CD4-positive, alpha-beta T cell (primary cell): ENCODE measurements at regions of chr1 and their contacts with region 1.

Region 1: DNA sequence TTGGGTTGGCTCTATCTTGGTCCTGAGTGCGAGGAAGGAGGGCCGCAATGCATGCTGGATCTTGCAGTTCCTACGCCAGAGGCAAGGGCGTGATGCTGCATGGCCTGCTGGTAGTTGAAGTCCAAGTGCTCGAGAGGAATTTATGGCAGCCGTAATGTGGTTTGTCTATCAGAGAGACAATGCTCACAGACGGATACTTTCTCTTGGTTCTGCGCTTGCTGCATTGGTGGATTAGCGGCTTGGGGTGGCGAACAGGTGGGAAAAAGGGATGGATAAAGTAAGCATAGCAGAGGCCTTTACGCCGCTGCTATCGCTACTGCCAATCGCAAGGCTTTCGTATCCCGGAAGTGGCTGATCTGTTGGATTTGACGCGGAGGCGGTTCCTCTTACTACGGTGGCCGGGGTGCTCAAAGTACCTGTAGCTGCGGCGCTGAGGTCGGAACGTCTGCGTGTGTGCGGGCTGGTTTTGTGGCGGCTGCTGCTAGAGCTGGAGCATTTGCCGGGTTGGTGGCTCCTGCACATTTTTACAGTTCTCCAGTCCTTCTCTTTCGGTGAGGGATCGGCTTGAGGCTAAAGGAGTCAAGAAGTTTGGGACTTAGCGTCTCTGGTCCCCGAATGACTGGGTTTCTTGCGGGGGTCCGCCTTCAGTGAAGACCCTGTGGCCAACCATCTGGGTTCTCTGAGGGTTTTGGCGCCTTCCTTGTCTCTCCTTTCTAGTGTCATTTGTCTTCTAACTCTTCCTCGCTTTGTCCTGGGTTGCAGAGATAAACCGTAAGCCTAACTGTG is at the start of gene ATG4C:
- DNase-seq: peak; percentile 83 to 97 (median 88)
- ATAC-seq: peak; percentile 96
- H3K4me3 ChIP-seq: peak within 1 kb of the TSS; percentile 63
- H3K4me3 Mint-ChIP-seq: no peak within 1 kb of the TSS
- H3K27ac ChIP-seq: peak within 1 kb of the TSS; percentile 85 to 88
- H3K27ac Mint-ChIP-seq: no peak within 1 kb of the TSS
- H3K4me1 ChIP-seq: peaks cover 10% of the 10 kb centered on the region
- H3K4me1 Mint-ChIP-seq: peaks cover 14% of the 10 kb centered on the region
- H3K27me3 ChIP-seq: no peaks in the 10 kb centered on the region
- H3K27me3 Mint-ChIP-seq: peaks cover 4% of the 10 kb centered on the region
- CTCF ChIP-seq: no peak
- total RNA-seq, gene ATG4C: 4.2 to 4.6 TPM

Region 2: GRCh38 chr1:61724813-61725694 is 1058.9 kb before region 1 on chr1 and contains the start of gene TM2D1:
- CTCF ChIA-PET with region 1: no interaction called
- POLR2A ChIA-PET with region 1: no interaction called
- intact Hi-C with region 1: loop called in 1 of 2 experiments (anchors 10 kb)
- DNase-seq: peak; percentile 65 to 92 (median 78)
- ATAC-seq: peak; percentile 91
- H3K4me3 ChIP-seq: peak within 1 kb of the TSS; percentile 93
- H3K4me3 Mint-ChIP-seq: peak within 1 kb of the TSS; percentile 97
- H3K27ac ChIP-seq: peak within 1 kb of the TSS; percentile 87 to 91
- H3K27ac Mint-ChIP-seq: peak within 1 kb of the TSS; percentile 97
- H3K4me1 ChIP-seq: peaks cover 17% of the 10 kb centered on the region
- H3K4me1 Mint-ChIP-seq: peaks cover 40% of the 10 kb centered on the region
- H3K27me3 ChIP-seq: no peaks in the 10 kb centered on the region
- H3K27me3 Mint-ChIP-seq: no peaks in the 10 kb centered on the region
- CTCF ChIP-seq: no peak
- total RNA-seq, gene TM2D1: 12.0 to 13.7 TPM

Region 3: GRCh38 chr1:62271948-62272728 is 511.8 kb before region 1 on chr1:
- CTCF ChIA-PET with region 1: no interaction called
- POLR2A ChIA-PET with region 1: no interaction called
- intact Hi-C with region 1: loop called in 1 of 2 experiments (anchors 5 kb)
- DNase-seq: peak; percentile 11 to 71 (median 48)
- ATAC-seq: peak; percentile 90
- H3K4me3 ChIP-seq: no peak overlapping the region
- H3K4me3 Mint-ChIP-seq: peak overlapping the region; percentile 47
- H3K27ac ChIP-seq: peak overlapping the region; percentile 31 to 69
- H3K27ac Mint-ChIP-seq: peak overlapping the region; percentile 87
- H3K4me1 ChIP-seq: peaks cover 27% of the 10 kb centered on the region
- H3K4me1 Mint-ChIP-seq: peaks cover 37% of the 10 kb centered on the region
- H3K27me3 ChIP-seq: no peaks in the 10 kb centered on the region
- H3K27me3 Mint-ChIP-seq: no peaks in the 10 kb centered on the region
- CTCF ChIP-seq: no peak

Region 4: DNA sequence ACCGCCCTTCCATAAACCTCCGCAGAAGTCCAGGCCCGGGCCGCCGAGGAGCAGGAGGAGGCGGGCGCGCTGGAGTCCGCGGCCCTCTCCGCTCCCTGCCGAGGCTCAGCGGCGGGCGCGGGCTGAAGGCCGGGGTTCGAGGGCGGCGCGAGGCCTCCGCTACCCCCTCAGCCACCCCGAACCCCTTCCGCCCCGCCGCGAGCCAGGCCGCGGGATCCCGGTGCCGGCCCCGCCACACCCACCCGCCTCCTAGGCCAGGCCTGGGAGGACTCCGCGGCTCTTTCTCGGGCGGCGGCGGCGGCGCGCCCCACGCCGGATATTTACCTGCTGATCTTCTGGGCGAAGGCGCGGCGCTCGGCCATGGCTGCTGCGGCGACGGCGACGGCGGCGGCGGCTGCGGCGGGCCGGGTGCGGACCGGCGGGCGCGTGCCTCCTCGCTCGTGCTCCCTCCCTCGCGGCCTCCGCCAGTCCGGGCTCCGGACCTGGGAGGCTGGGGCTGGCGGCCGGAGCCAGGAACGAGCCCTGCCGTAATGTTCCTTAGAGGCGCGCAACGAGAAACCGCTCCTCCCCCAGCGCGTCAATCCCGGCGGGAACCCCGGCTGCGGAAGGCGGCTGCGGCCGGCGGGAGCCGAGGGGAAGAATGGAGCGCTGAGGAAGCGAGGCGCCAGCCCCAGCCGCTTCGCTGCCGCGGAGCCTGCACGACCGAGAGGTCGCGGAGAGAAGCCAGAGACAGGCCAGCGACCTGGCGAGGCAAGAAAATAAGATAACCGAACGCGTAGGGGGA is 95.8 kb before region 1 on chr1 and contains the start of gene DOCK7:
- CTCF ChIA-PET with region 1: no interaction called
- POLR2A ChIA-PET with region 1: no interaction called
- intact Hi-C with region 1: loop called in 1 of 2 experiments (anchors 5 kb)
- DNase-seq: peak; percentile 19 to 73 (median 54)
- ATAC-seq: peak; percentile 76
- H3K4me3 ChIP-seq: peak within 1 kb of the TSS; percentile 77
- H3K4me3 Mint-ChIP-seq: peak within 1 kb of the TSS; percentile 98
- H3K27ac ChIP-seq: peak within 1 kb of the TSS in 1 of 2 donors; percentile 58
- H3K27ac Mint-ChIP-seq: peak within 1 kb of the TSS; percentile 88
- H3K4me1 ChIP-seq: peaks cover 7% of the 10 kb centered on the region
- H3K4me1 Mint-ChIP-seq: peaks cover 37% of the 10 kb centered on the region
- H3K27me3 ChIP-seq: no peaks in the 10 kb centered on the region
- H3K27me3 Mint-ChIP-seq: peaks cover 5% of the 10 kb centered on the region
- CTCF ChIP-seq: no peak
- total RNA-seq, gene DOCK7: 6.0 to 7.9 TPM

Region 5: DNA sequence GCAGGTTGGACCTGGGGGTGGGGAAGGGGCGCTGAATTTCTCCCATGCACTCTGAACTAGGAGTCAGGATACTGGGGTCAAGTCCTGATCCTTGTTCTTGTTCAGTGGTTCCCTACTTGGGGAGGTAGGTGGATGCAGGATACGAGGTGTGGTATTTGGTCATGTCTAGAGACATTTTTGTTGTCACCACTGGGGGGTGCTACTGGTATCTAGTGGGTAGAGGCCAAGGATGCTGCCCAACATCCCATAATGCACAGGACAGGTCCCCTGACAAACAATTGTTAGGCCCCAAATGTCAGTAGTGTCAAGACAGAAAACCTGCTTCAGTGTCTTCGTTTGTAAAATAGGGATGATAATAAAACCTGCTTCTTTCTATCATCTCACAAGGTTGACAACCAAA is 279.5 kb after region 1 on chr1:
- CTCF ChIA-PET with region 1: no interaction called
- POLR2A ChIA-PET with region 1: no interaction called
- intact Hi-C with region 1: no loop called
- DNase-seq: no peak
- ATAC-seq: no peak
- H3K4me3 ChIP-seq: no peak overlapping the region
- H3K4me3 Mint-ChIP-seq: no peak overlapping the region
- H3K27ac ChIP-seq: no peak overlapping the region
- H3K27ac Mint-ChIP-seq: no peak overlapping the region
- H3K4me1 ChIP-seq: no peaks in the 10 kb centered on the region
- H3K4me1 Mint-ChIP-seq: no peaks in the 10 kb centered on the region
- H3K27me3 ChIP-seq: no peaks in the 10 kb centered on the region
- H3K27me3 Mint-ChIP-seq: peaks cover 4% of the 10 kb centered on the region
- CTCF ChIP-seq: no peak